HEK293T (cell line): ENCODE measurements at regions of chr21 and their contacts with region 1.

Region 1: DNA sequence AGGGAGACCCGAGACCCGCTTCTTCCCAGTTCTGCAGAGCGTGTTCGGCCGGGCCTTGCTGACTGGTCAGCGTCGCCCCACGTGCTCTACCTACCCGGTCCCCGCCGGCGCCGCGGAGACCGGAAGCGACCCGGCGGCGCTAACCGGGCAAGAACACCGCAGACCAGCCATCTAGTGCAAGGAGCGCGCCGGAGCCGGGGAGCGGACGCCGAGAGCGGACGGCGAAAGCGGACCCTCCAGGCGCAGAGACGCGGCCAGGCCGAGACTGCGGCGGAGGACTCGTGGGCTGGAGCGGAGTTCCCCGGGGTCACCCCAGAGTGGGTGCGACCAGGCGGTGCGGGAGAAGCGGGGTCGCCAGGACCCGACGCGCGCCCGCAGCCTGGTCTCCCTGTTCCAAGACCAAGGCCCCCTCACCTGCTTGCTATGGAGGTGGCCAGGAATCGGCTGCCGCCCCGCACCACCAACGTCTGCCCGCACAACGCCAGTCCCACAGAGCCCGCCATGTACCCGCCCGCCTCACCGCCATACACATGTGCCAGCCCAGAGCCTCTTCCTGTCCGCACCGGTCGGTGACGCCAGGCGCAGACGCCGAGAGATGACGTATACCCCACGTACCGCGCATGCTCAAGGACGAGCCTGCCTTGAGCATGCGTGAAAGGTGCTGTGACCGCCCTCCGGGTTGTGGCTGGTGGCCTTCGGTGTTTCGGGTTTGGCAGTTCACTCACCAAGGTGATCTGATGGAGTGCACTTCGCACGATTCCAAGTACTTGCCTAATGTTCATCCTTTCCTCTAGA is at the start of gene WDR4:
- DNase-seq: peak; percentile 100

Region 2: DNA sequence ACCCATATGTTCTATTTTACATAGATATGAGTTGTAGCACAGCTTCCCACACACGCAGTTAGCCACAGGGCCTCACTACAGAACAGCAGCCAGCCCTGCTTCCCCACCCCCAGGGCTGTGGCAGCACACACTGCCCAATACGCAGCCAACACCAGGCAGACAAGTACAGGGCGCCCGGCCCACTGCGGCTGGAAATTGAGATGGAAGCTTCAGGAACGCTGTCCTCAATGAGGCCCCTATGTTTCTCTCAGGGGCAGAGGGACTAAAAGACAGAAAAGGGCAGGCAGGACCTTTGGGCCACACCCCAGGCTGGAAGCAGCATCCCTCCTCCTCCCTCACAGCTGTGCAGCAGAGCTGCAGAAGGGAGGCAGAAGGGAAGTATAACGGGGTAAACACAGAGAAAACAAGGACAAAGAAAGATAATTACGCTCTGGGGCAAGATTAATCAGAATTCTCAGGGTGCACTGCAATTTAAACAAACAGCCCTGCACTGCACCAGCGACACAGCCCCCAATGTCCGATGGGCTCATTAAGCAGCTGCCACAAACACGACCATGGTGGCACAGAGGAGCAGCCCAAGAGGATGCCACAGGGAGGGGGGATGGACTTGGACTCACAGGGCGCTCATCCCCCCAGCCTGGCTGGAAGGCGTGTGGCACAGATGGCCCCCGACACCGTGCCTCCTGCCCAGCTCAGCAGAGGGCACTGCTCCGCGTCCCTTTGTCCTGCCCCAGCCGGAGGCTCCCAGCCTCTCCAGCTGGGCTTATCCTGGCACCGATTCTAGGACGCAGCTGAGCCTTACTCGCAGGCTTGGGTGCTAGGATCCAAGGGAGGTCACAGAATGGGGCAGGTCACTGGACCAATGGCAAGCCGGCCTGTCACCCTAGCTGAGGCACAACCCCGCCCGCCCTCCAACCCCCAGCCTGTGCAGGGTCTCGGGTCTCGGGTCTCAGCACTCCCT is 14.1 kb before region 1 on chr21:
- CTCF ChIA-PET with region 1: no interaction called
- POLR2A ChIA-PET with region 1: interaction called, 10 read pairs
- DNase-seq: no peak

Region 3: DNA sequence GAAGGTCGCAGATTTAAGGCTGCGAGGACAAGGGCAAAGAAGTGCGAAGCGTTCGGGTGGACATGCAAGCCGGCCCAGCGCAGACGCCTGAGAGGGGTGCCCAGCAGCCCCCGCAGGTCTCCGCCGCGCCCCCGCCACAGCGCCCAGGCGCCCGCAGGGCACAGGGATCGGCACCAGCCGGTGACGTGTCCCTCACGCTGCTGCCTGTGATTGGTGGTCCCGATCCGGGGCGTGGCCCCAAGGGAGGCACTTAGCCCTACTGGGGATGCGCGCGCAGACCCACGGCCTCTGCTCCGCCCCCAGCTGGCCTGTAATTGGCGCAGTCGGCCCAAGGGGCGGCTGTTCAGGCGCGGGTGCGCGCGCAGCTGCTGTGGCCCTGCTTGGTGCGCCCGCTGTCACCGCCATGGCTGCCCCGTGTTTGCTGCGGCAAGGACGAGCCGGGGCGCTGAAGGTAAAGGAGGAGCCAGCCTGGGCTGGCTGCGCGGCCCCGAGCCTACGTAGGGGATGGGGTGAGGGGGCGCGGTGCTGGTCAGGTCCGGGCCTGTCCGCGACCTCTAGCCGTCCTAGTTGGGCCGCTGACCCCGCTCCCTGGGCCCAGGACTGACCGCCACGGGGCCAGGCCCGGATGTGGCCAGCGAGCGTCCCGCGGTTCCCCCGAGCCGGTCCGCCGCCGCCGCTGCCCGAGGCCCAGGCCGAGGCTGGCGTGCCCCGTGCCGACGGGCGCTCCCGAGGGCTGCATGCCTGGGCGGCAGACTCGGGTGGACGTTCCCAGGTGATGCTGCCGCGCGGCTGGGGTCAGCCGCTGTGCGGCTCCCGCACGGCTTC is 14.0 kb after region 1 on chr21 and contains the start of gene NDUFV3:
- CTCF ChIA-PET with region 1: interaction called, 3 read pairs
- POLR2A ChIA-PET with region 1: interaction called, 19 read pairs
- DNase-seq: peak; percentile 100